Activated B cell treated with CpG ODN at 0.5 μM for 24 hours (primary cell): ENCODE measurements at regions of chr1 and their contacts with region 1.

Region 1: GRCh38 chr1:16351994-16352841 is at the start of gene FBXO42:
- DNase-seq: peak; percentile 94
- ATAC-seq: peak; percentile 91
- H3K4me3 Mint-ChIP-seq: peak within 1 kb of the TSS; percentile 88
- H3K27ac Mint-ChIP-seq: peak within 1 kb of the TSS; percentile 88
- H3K4me1 Mint-ChIP-seq: peaks cover 38% of the 10 kb centered on the region
- H3K27me3 Mint-ChIP-seq: no peaks in the 10 kb centered on the region
- CTCF ChIP-seq: no peak
- total RNA-seq, gene FBXO42: 19.0 and 20.5 TPM in 2 replicates

Region 2: DNA sequence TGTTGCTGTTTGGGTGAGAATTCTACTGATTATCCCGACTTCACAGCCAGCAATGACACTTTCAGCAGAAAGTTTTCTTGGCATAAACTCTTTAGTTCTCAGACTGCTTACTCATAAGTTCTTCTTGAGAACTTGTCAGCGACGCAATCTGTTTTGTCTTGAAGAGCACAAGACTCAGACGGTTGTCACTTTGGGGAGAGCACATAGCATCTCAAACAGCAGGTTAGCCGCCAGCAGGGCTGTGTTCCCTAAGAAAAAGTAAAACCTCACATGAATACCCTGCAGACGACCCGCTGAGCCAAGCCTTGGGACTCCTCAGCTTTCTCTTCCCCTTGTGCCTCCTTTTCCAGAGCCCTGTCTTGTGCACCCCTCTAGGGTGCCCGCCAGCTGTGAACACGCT is 778.7 kb before region 1 on chr1:
- CTCF ChIA-PET with region 1: no interaction called
- POLR2A ChIA-PET with region 1: interaction called, 11 read pairs
- intact Hi-C with region 1: no loop called
- DNase-seq: no peak
- ATAC-seq: no peak
- H3K4me3 Mint-ChIP-seq: peak overlapping the region; percentile 24
- H3K27ac Mint-ChIP-seq: peak overlapping the region; percentile 86
- H3K4me1 Mint-ChIP-seq: peaks cover 43% of the 10 kb centered on the region
- H3K27me3 Mint-ChIP-seq: no peaks in the 10 kb centered on the region
- CTCF ChIP-seq: no peak

Region 3: DNA sequence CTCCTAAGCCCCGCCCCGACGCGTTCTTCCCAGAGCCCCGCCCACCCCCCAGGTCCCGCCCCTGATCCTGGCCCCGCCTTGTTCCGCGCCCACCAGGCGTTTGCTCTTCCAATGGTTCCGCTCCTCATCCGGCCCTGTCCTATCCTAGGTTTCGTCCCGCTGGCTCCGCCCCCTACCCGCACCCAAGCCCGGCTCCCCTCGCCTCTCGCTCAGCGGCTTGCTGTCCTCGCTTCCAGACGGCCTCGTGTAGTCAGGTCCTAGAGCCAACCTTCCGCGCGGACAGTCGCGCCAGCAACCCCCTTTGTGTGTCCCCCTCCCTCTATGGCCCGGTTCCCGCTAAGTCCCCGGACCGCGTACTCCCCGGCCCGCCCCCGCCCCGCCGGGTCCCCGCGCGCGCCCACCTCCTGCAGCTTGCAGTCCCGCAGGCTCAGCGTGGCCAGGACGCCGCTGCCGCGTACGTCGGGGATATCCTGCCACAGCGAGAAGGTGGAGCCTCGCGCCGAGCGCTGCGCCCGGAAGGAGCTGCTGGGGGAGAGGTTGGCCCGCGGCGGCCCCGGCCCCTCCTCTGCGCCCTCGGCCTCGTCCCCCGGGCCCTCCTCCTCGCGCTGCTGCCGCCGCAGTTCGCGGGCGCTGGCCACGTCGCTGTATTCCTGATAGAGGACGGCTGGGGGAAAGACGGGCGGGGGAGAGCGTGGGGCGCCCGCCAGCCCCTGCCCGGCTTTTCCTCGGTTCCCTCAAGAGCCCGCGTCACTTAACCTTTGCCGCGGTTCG is 145.5 kb before region 1 on chr1:
- CTCF ChIA-PET with region 1: no interaction called
- POLR2A ChIA-PET with region 1: no interaction called
- intact Hi-C with region 1: loop called (anchors 5 kb)
- DNase-seq: peak; percentile 82
- ATAC-seq: peak; percentile 89
- H3K4me3 Mint-ChIP-seq: peak overlapping the region; percentile 91
- H3K27ac Mint-ChIP-seq: peak overlapping the region; percentile 91
- H3K4me1 Mint-ChIP-seq: peaks cover 3% of the 10 kb centered on the region
- H3K27me3 Mint-ChIP-seq: no peaks in the 10 kb centered on the region
- CTCF ChIP-seq: no peak

Region 4: DNA sequence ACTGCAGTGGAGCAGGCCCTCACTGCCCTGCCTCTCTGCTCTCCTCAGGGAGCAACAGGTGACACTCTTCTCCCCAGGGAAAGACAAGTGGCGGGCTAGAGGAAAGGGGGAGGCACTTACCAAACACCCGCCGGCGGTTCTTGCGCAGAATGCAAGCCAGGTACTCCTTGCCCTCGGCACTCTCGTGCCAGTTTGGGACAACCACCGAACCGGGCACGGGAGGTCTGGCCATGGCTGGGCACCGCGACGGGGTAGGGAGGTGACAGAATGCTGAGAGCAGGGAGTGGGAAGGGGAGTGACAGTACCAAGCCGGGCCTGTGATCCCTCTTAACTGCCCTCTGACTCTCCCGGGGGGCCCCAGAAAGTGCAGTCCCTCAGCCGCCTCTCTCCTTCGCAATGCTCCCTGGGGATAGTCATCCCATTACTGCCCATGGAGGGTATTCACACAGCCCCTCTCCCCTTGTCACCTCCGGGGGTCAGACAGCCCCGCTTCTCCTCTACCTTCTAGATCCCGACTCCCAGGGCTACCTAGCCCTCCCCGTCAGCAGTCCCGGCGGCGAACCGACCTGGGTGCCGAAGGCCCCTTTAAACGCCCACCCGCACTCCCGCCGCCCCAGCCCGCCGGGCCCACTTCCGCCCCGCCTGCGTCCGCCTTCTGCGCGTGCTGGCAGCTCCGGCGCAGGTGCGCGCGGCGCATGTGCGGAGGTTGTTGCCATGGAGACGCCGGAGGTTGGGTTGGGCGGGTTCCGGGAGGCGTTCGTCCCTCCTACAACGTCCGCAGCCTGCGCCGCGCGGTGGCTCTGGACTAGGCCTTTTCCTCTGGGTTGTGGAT is 115.5 kb before region 1 on chr1 and contains the start of gene CPLANE2:
- CTCF ChIA-PET with region 1: no interaction called
- POLR2A ChIA-PET with region 1: interaction called, 3 read pairs
- intact Hi-C with region 1: loop called (anchors 2 kb)
- DNase-seq: peak; percentile 97
- ATAC-seq: peak; percentile 82
- H3K4me3 Mint-ChIP-seq: peak within 1 kb of the TSS; percentile 90
- H3K27ac Mint-ChIP-seq: peak within 1 kb of the TSS; percentile 95
- H3K4me1 Mint-ChIP-seq: peaks cover 12% of the 10 kb centered on the region
- H3K27me3 Mint-ChIP-seq: no peaks in the 10 kb centered on the region
- CTCF ChIP-seq: no peak
- total RNA-seq, gene CPLANE2: 5.0 and 5.1 TPM in 2 replicates

Region 5: DNA sequence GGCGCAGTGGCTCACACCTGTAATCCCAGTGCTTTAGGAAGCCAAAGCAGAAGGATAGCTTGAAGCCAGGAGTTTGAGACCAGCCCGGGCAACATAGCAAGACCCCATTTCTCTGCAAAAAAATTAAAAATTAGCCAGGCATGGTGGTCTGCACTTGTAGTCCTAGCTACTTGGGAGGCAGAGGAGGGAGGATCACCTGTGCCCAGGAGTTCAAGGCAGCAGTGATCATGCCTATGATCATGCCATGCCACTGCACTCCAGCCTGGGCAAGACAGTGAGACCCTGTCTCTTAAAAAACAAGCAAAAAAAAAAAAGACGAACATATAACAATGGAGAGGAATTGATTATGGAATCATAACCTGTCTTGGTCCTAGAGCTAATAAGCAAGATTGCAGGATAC is 45.0 kb before region 1 on chr1:
- CTCF ChIA-PET with region 1: no interaction called
- POLR2A ChIA-PET with region 1: no interaction called
- intact Hi-C with region 1: loop called (anchors 5 kb)
- DNase-seq: no peak
- ATAC-seq: no peak
- H3K4me3 Mint-ChIP-seq: no peak overlapping the region
- H3K27ac Mint-ChIP-seq: no peak overlapping the region
- H3K4me1 Mint-ChIP-seq: no peaks in the 10 kb centered on the region
- H3K27me3 Mint-ChIP-seq: no peaks in the 10 kb centered on the region
- CTCF ChIP-seq: no peak

Region 6: GRCh38 chr1:16440470-16441281 is 88.5 kb after region 1 on chr1 and contains the start of gene NECAP2:
- CTCF ChIA-PET with region 1: interaction called, 3 read pairs
- POLR2A ChIA-PET with region 1: interaction called, 3 read pairs
- intact Hi-C with region 1: loop called (anchors 5 kb)
- DNase-seq: peak; percentile 91
- ATAC-seq: peak; percentile 91
- H3K4me3 Mint-ChIP-seq: peak within 1 kb of the TSS; percentile 94
- H3K27ac Mint-ChIP-seq: peak within 1 kb of the TSS; percentile 91
- H3K4me1 Mint-ChIP-seq: peaks cover 30% of the 10 kb centered on the region
- H3K27me3 Mint-ChIP-seq: no peaks in the 10 kb centered on the region
- CTCF ChIP-seq: peak; percentile 92
- total RNA-seq, gene NECAP2: 85.5 and 88.4 TPM in 2 replicates

Region 7: GRCh38 chr1:16954579-16954978 is 602.4 kb after region 1 on chr1:
- CTCF ChIA-PET with region 1: no interaction called
- POLR2A ChIA-PET with region 1: no interaction called
- intact Hi-C with region 1: loop called (anchors 5 kb)
- DNase-seq: no peak
- ATAC-seq: no peak
- H3K4me3 Mint-ChIP-seq: no peak overlapping the region
- H3K27ac Mint-ChIP-seq: no peak overlapping the region
- H3K4me1 Mint-ChIP-seq: peaks cover 7% of the 10 kb centered on the region
- H3K27me3 Mint-ChIP-seq: no peaks in the 10 kb centered on the region
- CTCF ChIP-seq: no peak